ENCODE measurements at regions of chr11 and their contacts with region 1.

Region 1: GRCh38 chr11:33005175-33005574 is 10.5 kb upstream of the DEPDC7 start:
- DNase-seq: peak in 7 of 10 donors; percentile 29 to 59 (median 52)
- ATAC-seq: peak; percentile 94 to 96
- H3K4me3 Mint-ChIP-seq: peak overlapping the region; percentile 30 to 65 (median 56)
- H3K27ac Mint-ChIP-seq: peak overlapping the region in 7 of 10 donors; percentile 2 to 50 (median 42)
- H3K4me1 Mint-ChIP-seq: peaks cover 18 to 36% (median 30%) of the 10 kb centered on the region in 4 donors
- H3K27me3 Mint-ChIP-seq: no peaks in the 10 kb centered on the region

Region 2: DNA sequence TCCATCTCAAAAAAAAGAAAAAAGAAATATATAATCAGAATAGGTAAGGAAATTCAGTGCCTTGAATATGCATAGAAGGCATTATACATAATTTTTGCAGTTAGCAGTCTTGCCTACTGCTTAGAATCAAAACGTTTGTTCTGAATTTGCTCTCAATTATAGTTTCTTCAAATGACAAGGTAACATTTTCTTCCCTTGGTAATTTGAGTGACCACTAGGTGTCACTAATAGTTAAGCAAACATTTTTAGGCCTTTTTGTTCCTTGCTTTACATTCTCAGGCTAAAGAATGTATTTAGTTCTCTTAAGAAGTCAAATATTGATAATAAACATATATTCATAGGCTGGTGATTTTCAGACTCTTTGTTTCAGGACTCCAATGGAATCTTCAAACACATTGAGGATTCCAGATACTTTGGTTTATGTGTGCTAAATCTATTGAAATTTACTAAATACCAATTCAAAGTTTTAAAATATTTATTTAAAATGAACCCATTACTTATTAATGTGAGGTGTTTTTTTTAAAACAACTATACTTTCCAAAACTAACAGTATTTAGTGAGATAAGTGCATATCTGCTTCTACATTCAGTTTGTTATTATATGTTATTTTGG is 44.5 kb before region 1 on chr11:
- POLR2A ChIA-PET with region 1: no interaction called
- DNase-seq: peak in 3 of 10 donors; percentile 61 to 65 (median 61)
- ATAC-seq: no peak
- H3K4me3 Mint-ChIP-seq: no peak overlapping the region
- H3K27ac Mint-ChIP-seq: no peak overlapping the region
- H3K4me1 Mint-ChIP-seq: no peaks in the 10 kb centered on the region
- H3K27me3 Mint-ChIP-seq: no peaks in the 10 kb centered on the region

Region 3: GRCh38 chr11:32972781-32973180 is 32.4 kb before region 1 on chr11:
- POLR2A ChIA-PET with region 1: no interaction called
- DNase-seq: no peak
- ATAC-seq: no peak
- H3K4me3 Mint-ChIP-seq: no peak overlapping the region
- H3K27ac Mint-ChIP-seq: peak overlapping the region in 1 of 10 donors; percentile 12
- H3K4me1 Mint-ChIP-seq: peaks cover 0 to 2% (median 0%) of the 10 kb centered on the region in 4 donors
- H3K27me3 Mint-ChIP-seq: no peaks in the 10 kb centered on the region

Region 4: GRCh38 chr11:33015621-33016551 is 10.7 kb after region 1 on chr11 and contains the start of gene DEPDC7:
- POLR2A ChIA-PET with region 1: interaction called, 17 read pairs
- DNase-seq: peak; percentile 65 to 89 (median 81)
- ATAC-seq: peak; percentile 81 to 82
- H3K4me3 Mint-ChIP-seq: peak within 1 kb of the TSS; percentile 82 to 96 (median 90)
- H3K27ac Mint-ChIP-seq: peak within 1 kb of the TSS; percentile 31 to 87 (median 82)
- H3K4me1 Mint-ChIP-seq: peaks cover 13 to 60% (median 44%) of the 10 kb centered on the region in 4 donors
- H3K27me3 Mint-ChIP-seq: peaks cover 0 to 15% (median 0%) of the 10 kb centered on the region in 5 donors
- polyA plus RNA-seq, gene DEPDC7: 0.77 to 2.7 (median 1.1) TPM